ENCODE measurements at regions of chr3 and their contacts with region 1.

Region 1: GRCh38 chr3:102229062-102229655 is 205.7 kb upstream of the ZPLD1 start:
- DNase-seq: peak; percentile 49 to 80 (median 74)
- ATAC-seq: peak; percentile 89
- H3K4me3 ChIP-seq: no peak overlapping the region
- H3K4me3 Mint-ChIP-seq: no peak overlapping the region
- H3K27ac ChIP-seq: no peak overlapping the region
- H3K27ac Mint-ChIP-seq: no peak overlapping the region
- H3K4me1 ChIP-seq: peaks cover 0 to 6% of the 10 kb centered on the region in 2 donors
- H3K4me1 Mint-ChIP-seq: peaks cover 1 to 27% (median 14%) of the 10 kb centered on the region in 7 donors
- H3K27me3 ChIP-seq: no peaks in the 10 kb centered on the region
- H3K27me3 Mint-ChIP-seq: peaks cover 0 to 25% (median 0%) of the 10 kb centered on the region in 5 donors

Region 2: DNA sequence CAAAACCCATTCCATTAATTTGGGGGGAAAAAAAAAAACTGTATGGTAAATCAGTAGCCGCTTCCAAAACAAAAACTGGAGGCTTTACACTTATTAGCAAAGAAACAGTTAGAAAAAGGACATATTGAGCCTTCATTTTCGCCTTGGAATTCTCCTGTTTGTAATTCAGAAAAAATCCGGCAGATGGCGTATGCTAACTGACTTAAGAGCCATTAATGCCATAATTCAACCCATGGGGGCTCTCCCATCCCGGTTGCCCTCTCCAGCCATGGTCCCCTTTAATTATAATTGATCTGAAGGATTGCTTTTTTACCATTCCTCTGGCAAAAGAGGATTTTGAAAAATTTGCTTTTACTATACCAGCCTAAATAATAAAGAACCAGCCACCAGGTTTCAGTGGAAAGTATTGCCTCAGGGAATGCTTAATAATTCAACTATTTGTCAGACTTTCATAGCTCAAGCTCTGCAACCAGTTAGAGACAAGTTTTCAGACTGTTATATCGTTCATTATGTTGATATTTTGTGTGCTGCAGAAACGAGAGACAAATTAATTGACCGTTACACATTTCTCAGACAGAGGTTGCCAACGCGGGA is 533.3 kb before region 1 on chr3:
- CTCF ChIA-PET with region 1: interaction called, 7 read pairs
- POLR2A ChIA-PET with region 1: no interaction called
- intact Hi-C with region 1: loop called (anchors 1 to 2 kb)
- DNase-seq: peak in 7 of 9 donors; percentile 30 to 65 (median 57)
- ATAC-seq: no peak
- H3K4me3 ChIP-seq: no peak overlapping the region
- H3K4me3 Mint-ChIP-seq: no peak overlapping the region
- H3K27ac ChIP-seq: no peak overlapping the region
- H3K27ac Mint-ChIP-seq: peak overlapping the region in 2 of 9 donors; percentile 8 to 45
- H3K4me1 ChIP-seq: no peaks in the 10 kb centered on the region
- H3K4me1 Mint-ChIP-seq: peaks cover 0 to 4% (median 3%) of the 10 kb centered on the region in 7 donors
- H3K27me3 ChIP-seq: no peaks in the 10 kb centered on the region
- H3K27me3 Mint-ChIP-seq: no peaks in the 10 kb centered on the region

Region 3: GRCh38 chr3:101819758-101820157 is 409.4 kb before region 1 on chr3:
- CTCF ChIA-PET with region 1: interaction called, 423 read pairs
- POLR2A ChIA-PET with region 1: interaction called, 28 read pairs
- intact Hi-C with region 1: no loop called
- DNase-seq: no peak
- ATAC-seq: peak; percentile 79
- H3K4me3 ChIP-seq: no peak overlapping the region
- H3K4me3 Mint-ChIP-seq: no peak overlapping the region
- H3K27ac ChIP-seq: no peak overlapping the region
- H3K27ac Mint-ChIP-seq: peak overlapping the region in 3 of 9 donors; percentile 28 to 75 (median 31)
- H3K4me1 ChIP-seq: peaks cover 0 to 1% of the 10 kb centered on the region in 2 donors
- H3K4me1 Mint-ChIP-seq: peaks cover 16 to 50% (median 35%) of the 10 kb centered on the region in 7 donors
- H3K27me3 ChIP-seq: no peaks in the 10 kb centered on the region
- H3K27me3 Mint-ChIP-seq: no peaks in the 10 kb centered on the region

Region 4: DNA sequence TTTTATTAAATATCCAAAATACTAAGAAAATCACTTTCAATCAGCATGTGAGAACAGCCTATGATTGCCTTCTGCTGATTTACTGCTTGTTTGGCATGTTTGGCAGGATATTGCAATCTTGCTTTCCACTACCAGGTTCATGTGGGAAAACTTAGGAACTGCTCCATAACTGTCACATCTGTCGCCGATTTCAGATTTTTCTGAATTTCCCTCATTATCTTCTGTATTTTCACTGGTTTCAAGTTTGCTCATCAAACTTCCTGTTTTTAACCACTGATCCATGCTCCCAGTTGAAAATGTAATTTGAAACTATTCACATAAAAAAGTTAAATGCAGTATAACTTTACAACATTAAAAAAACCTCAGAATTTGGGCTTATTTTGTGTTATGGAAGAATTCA is 286.8 kb before region 1 on chr3:
- CTCF ChIA-PET with region 1: interaction called, 7 read pairs
- POLR2A ChIA-PET with region 1: interaction called, 4 read pairs
- intact Hi-C with region 1: loop called (anchors 2 to 5 kb)
- DNase-seq: no peak
- ATAC-seq: no peak
- H3K4me3 ChIP-seq: no peak overlapping the region
- H3K4me3 Mint-ChIP-seq: peak overlapping the region in 9 of 10 donors; percentile 2 to 66 (median 46)
- H3K27ac ChIP-seq: no peak overlapping the region
- H3K27ac Mint-ChIP-seq: peak overlapping the region in 6 of 9 donors; percentile 9 to 87 (median 36)
- H3K4me1 ChIP-seq: peaks cover 17 to 56% of the 10 kb centered on the region in 2 donors
- H3K4me1 Mint-ChIP-seq: peaks cover 7 to 37% (median 29%) of the 10 kb centered on the region in 7 donors
- H3K27me3 ChIP-seq: no peaks in the 10 kb centered on the region
- H3K27me3 Mint-ChIP-seq: peaks cover 0 to 28% (median 0%) of the 10 kb centered on the region in 5 donors

Region 5: DNA sequence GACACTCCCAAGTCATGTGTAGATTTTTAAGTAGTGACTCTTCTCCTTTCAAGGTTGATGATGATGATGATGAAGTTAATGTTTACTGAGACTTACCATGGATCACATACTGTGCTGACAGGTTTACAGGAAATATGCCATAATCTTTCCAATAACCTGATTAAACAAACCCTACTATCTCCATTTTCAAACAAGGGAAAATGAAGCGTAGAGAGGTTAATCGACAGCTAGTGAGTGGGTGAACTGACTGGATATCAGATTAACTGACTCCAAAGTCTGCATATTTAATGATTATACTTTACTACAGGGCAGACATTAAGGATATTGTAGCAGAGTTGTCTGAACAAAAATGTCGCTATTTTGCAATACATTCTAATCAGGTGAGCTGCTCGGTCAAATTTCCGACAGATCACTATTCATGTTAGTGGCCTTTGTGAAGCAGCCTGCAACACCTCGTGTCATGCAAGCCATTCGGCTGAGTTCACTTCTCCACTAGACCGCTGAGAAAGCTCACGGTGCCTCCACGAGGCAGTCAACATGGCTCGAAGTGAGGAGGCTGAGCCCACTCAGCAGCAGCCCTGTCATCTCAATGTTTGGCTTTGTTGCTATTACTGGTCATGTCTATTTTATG is 115.6 kb before region 1 on chr3:
- CTCF ChIA-PET with region 1: interaction called, 8 read pairs
- POLR2A ChIA-PET with region 1: no interaction called
- intact Hi-C with region 1: loop called (anchors 2 to 10 kb)
- DNase-seq: peak in 1 of 9 donors; percentile 16
- ATAC-seq: no peak
- H3K4me3 ChIP-seq: no peak overlapping the region
- H3K4me3 Mint-ChIP-seq: peak overlapping the region in 9 of 10 donors; percentile 6 to 63 (median 26)
- H3K27ac ChIP-seq: peak overlapping the region; percentile 69
- H3K27ac Mint-ChIP-seq: peak overlapping the region; percentile 88 to 99 (median 93)
- H3K4me1 ChIP-seq: peaks cover 0 to 29% of the 10 kb centered on the region in 2 donors
- H3K4me1 Mint-ChIP-seq: peaks cover 9 to 61% (median 44%) of the 10 kb centered on the region in 7 donors
- H3K27me3 ChIP-seq: no peaks in the 10 kb centered on the region
- H3K27me3 Mint-ChIP-seq: no peaks in the 10 kb centered on the region

Region 6: GRCh38 chr3:102673271-102674115 is 444.3 kb after region 1 on chr3:
- CTCF ChIA-PET with region 1: interaction called, 3 read pairs
- POLR2A ChIA-PET with region 1: no interaction called
- intact Hi-C with region 1: loop called (anchors 5 to 10 kb)
- DNase-seq: peak; percentile 3 to 52 (median 37)
- ATAC-seq: peak; percentile 70
- H3K4me3 ChIP-seq: no peak overlapping the region
- H3K4me3 Mint-ChIP-seq: peak overlapping the region in 1 of 10 donors; percentile 26
- H3K27ac ChIP-seq: no peak overlapping the region
- H3K27ac Mint-ChIP-seq: no peak overlapping the region
- H3K4me1 ChIP-seq: no peaks in the 10 kb centered on the region
- H3K4me1 Mint-ChIP-seq: peaks cover 0 to 4% (median 0%) of the 10 kb centered on the region in 7 donors
- H3K27me3 ChIP-seq: peaks cover 0 to 4% of the 10 kb centered on the region in 2 donors
- H3K27me3 Mint-ChIP-seq: peaks cover 0 to 41% (median 27%) of the 10 kb centered on the region in 5 donors

Region 7: GRCh38 chr3:102699819-102700140 is 470.6 kb after region 1 on chr3:
- CTCF ChIA-PET with region 1: no interaction called
- POLR2A ChIA-PET with region 1: no interaction called
- intact Hi-C with region 1: no loop called
- DNase-seq: no peak
- ATAC-seq: no peak
- H3K4me3 ChIP-seq: no peak overlapping the region
- H3K4me3 Mint-ChIP-seq: no peak overlapping the region
- H3K27ac ChIP-seq: no peak overlapping the region
- H3K27ac Mint-ChIP-seq: no peak overlapping the region
- H3K4me1 ChIP-seq: no peaks in the 10 kb centered on the region
- H3K4me1 Mint-ChIP-seq: no peaks in the 10 kb centered on the region
- H3K27me3 ChIP-seq: no peaks in the 10 kb centered on the region
- H3K27me3 Mint-ChIP-seq: peaks cover 4 to 20% (median 8%) of the 10 kb centered on the region in 5 donors